ENCODE measurements at regions of chr4 and their contacts with region 1.

Region 1: GRCh38 chr4:86895692-86896488 is 3.7 kb upstream of the C4orf36 start:
- DNase-seq: no peak
- H3K4me3 Mint-ChIP-seq: no peak overlapping the region
- H3K27ac Mint-ChIP-seq: no peak overlapping the region
- H3K4me1 Mint-ChIP-seq: peaks cover 5% of the 10 kb centered on the region
- H3K27me3 Mint-ChIP-seq: peaks cover 17% of the 10 kb centered on the region

Region 2: GRCh38 chr4:86452947-86453531 is 442.9 kb before region 1 on chr4:
- CTCF ChIA-PET with region 1: no interaction called
- intact Hi-C with region 1: no loop called
- DNase-seq: no peak
- H3K4me3 Mint-ChIP-seq: no peak overlapping the region
- H3K27ac Mint-ChIP-seq: no peak overlapping the region
- H3K4me1 Mint-ChIP-seq: peaks cover 2% of the 10 kb centered on the region
- H3K27me3 Mint-ChIP-seq: peaks cover 14% of the 10 kb centered on the region

Region 3: DNA sequence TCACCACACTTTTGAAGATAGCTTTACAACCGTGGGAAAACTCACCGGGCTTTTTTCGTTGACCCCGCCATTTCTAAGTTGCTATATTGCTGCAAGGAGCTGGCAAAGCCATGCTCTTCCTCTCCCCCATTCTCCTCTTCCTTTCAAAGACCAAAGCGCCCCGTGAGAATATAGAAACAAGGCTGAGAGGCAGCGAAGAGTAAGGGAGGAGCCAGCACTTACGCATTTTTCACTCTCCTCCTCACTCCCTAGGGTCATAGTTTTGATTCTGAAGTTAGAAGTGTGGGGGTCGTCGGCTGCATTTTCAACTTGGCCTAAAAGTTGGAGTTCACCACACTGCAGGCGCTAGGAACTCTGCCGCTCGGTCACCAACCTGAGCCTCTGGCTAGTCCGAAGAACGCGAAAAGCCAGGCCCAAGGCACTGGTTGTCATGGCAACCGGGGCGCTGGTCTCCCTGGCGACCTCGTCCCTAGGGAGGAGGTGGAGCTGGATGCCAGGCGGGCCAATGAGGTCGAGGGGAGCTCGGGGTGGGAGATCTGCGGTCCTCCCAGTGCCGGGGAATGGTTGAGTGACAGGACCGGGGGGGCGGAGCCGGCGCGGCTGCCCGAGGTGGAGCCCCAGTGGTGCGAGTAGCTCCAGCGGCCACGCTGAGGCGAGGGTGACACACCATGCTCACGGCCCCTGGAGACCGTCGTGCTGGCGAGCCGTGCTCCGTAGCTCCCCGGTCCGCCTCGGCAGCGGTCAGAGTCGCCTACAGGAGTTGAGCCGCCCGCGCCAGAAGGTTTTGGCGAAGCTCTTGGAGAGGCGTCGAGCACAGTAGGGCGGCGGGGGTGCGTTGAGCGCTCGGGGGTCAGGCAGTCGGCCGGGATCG is 302.0 kb before region 1 on chr4 and contains the start of gene PTPN13:
- CTCF ChIA-PET with region 1: no interaction called
- intact Hi-C with region 1: loop called (anchors 2 kb)
- DNase-seq: peak; percentile 55
- H3K4me3 Mint-ChIP-seq: peak within 1 kb of the TSS; percentile 69
- H3K27ac Mint-ChIP-seq: no peak within 1 kb of the TSS
- H3K4me1 Mint-ChIP-seq: peaks cover 14% of the 10 kb centered on the region
- H3K27me3 Mint-ChIP-seq: peaks cover 48% of the 10 kb centered on the region
- total RNA-seq, gene PTPN13: 0.17 TPM in 1 of 2 experiments, not detected in the other

Region 4: GRCh38 chr4:86653237-86653865 is 242.5 kb before region 1 on chr4:
- CTCF ChIA-PET with region 1: interaction called, 4 read pairs
- intact Hi-C with region 1: loop called (anchors 5 kb)
- DNase-seq: peak; percentile 19
- H3K4me3 Mint-ChIP-seq: no peak overlapping the region
- H3K27ac Mint-ChIP-seq: no peak overlapping the region
- H3K4me1 Mint-ChIP-seq: no peaks in the 10 kb centered on the region
- H3K27me3 Mint-ChIP-seq: no peaks in the 10 kb centered on the region

Region 5: DNA sequence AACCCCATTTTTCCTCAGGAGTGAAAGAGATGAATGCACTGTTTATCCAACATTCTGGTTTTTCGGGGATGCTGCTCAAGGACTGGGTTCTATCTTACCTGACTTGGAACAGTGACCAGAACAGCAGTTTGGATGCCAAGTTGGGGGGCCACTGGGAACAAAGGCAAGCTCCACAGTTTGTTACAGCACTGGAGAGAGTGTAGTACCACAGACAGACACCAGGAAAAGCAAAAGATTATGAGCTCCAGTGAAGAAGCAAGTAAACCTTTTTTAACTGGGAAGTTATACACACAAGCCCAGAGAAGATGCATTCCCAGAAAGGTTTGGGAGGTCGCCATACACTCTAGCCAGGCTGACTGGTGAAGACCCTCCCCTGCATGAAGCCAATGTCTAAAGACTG is 17.2 kb before region 1 on chr4:
- CTCF ChIA-PET with region 1: no interaction called
- intact Hi-C with region 1: no loop called
- DNase-seq: no peak
- H3K4me3 Mint-ChIP-seq: no peak overlapping the region
- H3K27ac Mint-ChIP-seq: no peak overlapping the region
- H3K4me1 Mint-ChIP-seq: no peaks in the 10 kb centered on the region
- H3K27me3 Mint-ChIP-seq: no peaks in the 10 kb centered on the region

Region 6: GRCh38 chr4:87235020-87235671 is 339.3 kb after region 1 on chr4:
- CTCF ChIA-PET with region 1: no interaction called
- intact Hi-C with region 1: loop called (anchors 1 kb)
- DNase-seq: no peak
- H3K4me3 Mint-ChIP-seq: no peak overlapping the region
- H3K27ac Mint-ChIP-seq: no peak overlapping the region
- H3K4me1 Mint-ChIP-seq: no peaks in the 10 kb centered on the region
- H3K27me3 Mint-ChIP-seq: peaks cover 2% of the 10 kb centered on the region

Measured in activated naive CD4-positive, alpha-beta T cell treated with anti-CD3 and anti-CD28 coated beads for 36 hours (primary cell).